T-cell (primary cell): ENCODE measurements at regions of chr20 and their contacts with region 1.

Region 1: DNA sequence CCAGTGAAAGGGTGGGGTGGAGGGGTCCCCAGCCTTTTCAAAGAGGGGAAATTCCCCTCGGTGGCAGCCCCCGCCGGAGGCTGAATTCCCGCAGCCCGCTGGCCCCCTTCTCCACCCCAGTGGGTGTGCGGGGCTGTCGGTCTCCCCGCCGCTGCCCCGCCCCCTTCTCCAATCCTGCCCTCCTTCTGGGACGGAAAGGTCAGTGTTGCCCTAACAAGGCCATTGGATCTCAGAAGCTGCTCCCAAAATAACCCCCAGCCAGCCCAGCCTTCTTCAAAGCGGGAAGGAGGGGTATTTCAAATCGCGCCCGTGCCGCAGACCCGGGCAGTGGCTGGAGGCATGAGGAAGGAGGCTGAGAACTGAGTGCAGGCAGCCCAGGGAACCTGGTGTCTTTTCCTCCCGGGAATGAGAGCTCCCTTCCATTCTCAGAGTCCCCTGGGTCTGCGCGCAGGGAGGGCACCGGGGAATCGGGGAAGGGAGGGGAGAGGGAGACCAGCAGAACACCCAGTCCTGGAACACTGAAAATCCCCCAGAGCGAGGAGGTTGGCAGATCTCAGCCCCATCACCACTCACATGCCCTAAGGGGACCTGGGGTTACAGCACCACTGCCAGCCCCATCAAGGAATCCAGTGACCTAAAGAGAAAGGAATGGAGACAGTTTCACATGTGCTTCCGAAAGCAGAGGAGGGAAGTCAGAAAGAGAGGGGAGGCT is at the start of gene JPH2:
- DNase-seq: no peak
- ATAC-seq: peak in 2 of 4 experiments; percentile 20 to 36
- H3K4me3 ChIP-seq: peak within 1 kb of the TSS in 1 of 2 donors; percentile 38
- H3K4me3 Mint-ChIP-seq: peak within 1 kb of the TSS in 2 of 3 donors; percentile 0 to 39
- H3K27ac ChIP-seq: no peak within 1 kb of the TSS
- H3K27ac Mint-ChIP-seq: no peak within 1 kb of the TSS
- H3K4me1 ChIP-seq: peaks cover 4 to 16% of the 10 kb centered on the region in 2 experiments
- H3K4me1 Mint-ChIP-seq: peaks cover 9 to 18% (median 16%) of the 10 kb centered on the region in 3 donors
- H3K27me3 ChIP-seq: peaks cover 22 to 63% of the 10 kb centered on the region in 2 experiments
- H3K27me3 Mint-ChIP-seq: peaks cover 53 to 58% of the 10 kb centered on the region in 2 donors
- total RNA-seq, gene JPH2: 0.06 to 0.15 (median 0.09) TPM in 3 of 5 donors, not detected in the others

Region 2: DNA sequence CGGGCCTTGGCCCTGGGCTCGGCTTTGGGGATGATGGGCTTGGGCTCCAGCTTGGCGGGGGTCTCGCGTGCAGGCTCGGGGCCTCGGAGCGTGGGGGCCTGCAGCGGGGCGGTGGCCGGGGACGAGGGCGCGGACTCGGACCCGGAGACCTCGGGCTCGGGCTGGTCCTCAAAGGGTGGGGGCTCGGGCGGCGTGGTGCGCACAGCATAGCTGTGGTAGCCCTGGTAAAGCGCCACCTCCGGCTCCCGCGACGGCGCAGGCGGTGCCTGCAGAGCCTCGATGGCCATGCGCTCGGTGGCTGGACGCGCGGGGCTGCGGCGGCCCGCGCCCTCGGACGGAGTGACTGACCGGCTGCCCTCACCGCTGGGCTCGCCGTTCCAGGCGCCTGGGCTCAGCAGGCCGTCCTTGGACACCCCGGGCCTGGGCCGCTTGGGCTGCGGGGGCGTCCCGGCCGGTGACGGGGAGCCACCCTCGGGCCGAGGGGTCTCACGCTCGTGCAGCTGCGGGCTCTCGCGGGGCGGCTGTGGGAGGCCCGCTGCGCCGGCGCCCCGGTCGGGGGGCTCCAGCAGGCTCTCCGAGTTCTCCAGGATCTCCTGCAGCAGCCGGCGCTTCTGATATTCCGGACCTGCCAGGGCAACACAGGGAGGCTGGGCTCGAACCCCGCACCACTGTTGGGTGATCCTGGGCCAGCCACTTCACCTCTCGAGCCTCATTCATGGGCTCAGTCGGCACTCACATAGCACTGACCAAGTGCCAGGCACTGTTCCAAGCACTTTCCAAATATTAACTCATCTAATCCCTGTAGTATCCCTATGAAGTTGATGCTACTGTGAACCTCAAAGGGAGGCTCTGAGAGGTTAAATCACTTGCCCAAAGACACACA is 71.2 kb before region 1 on chr20:
- CTCF ChIA-PET with region 1: interaction called, 13 to 37 read pairs
- POLR2A ChIA-PET with region 1: no interaction called
- DNase-seq: no peak
- ATAC-seq: peak in 2 of 4 experiments; percentile 14 to 32
- H3K4me3 ChIP-seq: no peak overlapping the region
- H3K4me3 Mint-ChIP-seq: no peak overlapping the region
- H3K27ac ChIP-seq: no peak overlapping the region
- H3K27ac Mint-ChIP-seq: no peak overlapping the region
- H3K4me1 ChIP-seq: peaks cover 0 to 4% of the 10 kb centered on the region in 2 experiments
- H3K4me1 Mint-ChIP-seq: peaks cover 0 to 5% (median 3%) of the 10 kb centered on the region in 3 donors
- H3K27me3 ChIP-seq: peaks cover 3 to 59% of the 10 kb centered on the region in 2 experiments
- H3K27me3 Mint-ChIP-seq: peaks cover 37 to 42% of the 10 kb centered on the region in 2 donors

Region 3: GRCh38 chr20:44153636-44154043 is 33.6 kb before region 1 on chr20:
- CTCF ChIA-PET with region 1: interaction called in 1 of 2 experiments, 11 read pairs
- POLR2A ChIA-PET with region 1: no interaction called
- DNase-seq: peak in 32 of 35 experiments; percentile 1 to 70 (median 22)
- ATAC-seq: peak; percentile 87 to 94 (median 90)
- H3K4me3 ChIP-seq: peak overlapping the region in 1 of 2 donors; percentile 10
- H3K4me3 Mint-ChIP-seq: peak overlapping the region; percentile 22 to 44 (median 29)
- H3K27ac ChIP-seq: peak overlapping the region; percentile 89
- H3K27ac Mint-ChIP-seq: peak overlapping the region; percentile 86 to 97
- H3K4me1 ChIP-seq: peaks cover 12 to 15% of the 10 kb centered on the region in 2 experiments
- H3K4me1 Mint-ChIP-seq: peaks cover 14 to 16% (median 15%) of the 10 kb centered on the region in 3 donors
- H3K27me3 ChIP-seq: peaks cover 0 to 22% of the 10 kb centered on the region in 2 experiments
- H3K27me3 Mint-ChIP-seq: peaks cover 9 to 14% of the 10 kb centered on the region in 2 donors

Region 4: GRCh38 chr20:45436732-45437391 is 1249.7 kb after region 1 on chr20:
- CTCF ChIA-PET with region 1: no interaction called
- POLR2A ChIA-PET with region 1: no interaction called
- DNase-seq: peak; percentile 63 to 93 (median 81)
- ATAC-seq: peak; percentile 98 to 99 (median 99)
- H3K4me3 ChIP-seq: peak overlapping the region; percentile 50 to 83
- H3K4me3 Mint-ChIP-seq: peak overlapping the region; percentile 80 to 82 (median 81)
- H3K27ac ChIP-seq: no peak overlapping the region
- H3K27ac Mint-ChIP-seq: peak overlapping the region; percentile 27 to 74
- H3K4me1 ChIP-seq: peaks cover 4 to 18% of the 10 kb centered on the region in 2 experiments
- H3K4me1 Mint-ChIP-seq: peaks cover 7 to 23% (median 11%) of the 10 kb centered on the region in 3 donors
- H3K27me3 ChIP-seq: no peaks in the 10 kb centered on the region
- H3K27me3 Mint-ChIP-seq: no peaks in the 10 kb centered on the region